K562 (cell line): ENCODE measurements at regions of chr7 and their contacts with region 1.

Region 1: DNA sequence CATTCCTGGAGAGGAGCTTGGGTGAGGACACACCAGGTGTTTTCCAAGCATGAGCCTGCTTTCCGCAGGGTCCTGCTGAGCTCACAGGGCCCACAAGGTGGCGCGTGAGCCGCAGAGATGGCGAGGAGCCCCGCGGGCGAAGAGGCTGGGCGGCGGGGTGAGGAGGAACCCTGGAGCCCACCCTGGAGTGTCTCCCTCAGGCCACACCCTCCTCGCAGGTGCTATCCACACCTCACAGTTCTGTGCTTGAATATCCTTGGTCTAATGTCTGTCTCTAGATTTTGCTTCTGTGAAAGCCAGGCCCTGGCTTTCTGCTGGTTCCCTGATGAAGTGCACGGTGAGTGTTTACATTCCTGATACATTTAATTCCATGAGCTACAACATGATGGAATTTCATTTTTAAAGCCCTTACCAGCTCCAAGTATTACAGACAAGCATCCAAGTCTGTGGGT is 433.6 kb downstream of the ACTR3B start:
- DNase-seq: peak; percentile 64 to 76 (median 66)
- ATAC-seq: peak; percentile 94
- H3K4me3 ChIP-seq: no peak overlapping the region
- H3K27ac ChIP-seq: no peak overlapping the region
- H3K4me1 ChIP-seq: peaks cover 0 to 4% of the 10 kb centered on the region in 2 experiments; a peak in 1 of 5 replicates
- H3K27me3 ChIP-seq: no peaks in the 10 kb centered on the region; a peak in 2 of 5 replicates
- CTCF ChIP-seq: peak; percentile 81 to 94 (median 85)
- EP300 ChIP-seq: no peak
- POLR2A ChIP-seq: no peak
- RAD21 ChIP-seq: peak; percentile 72 to 85

Region 2: DNA sequence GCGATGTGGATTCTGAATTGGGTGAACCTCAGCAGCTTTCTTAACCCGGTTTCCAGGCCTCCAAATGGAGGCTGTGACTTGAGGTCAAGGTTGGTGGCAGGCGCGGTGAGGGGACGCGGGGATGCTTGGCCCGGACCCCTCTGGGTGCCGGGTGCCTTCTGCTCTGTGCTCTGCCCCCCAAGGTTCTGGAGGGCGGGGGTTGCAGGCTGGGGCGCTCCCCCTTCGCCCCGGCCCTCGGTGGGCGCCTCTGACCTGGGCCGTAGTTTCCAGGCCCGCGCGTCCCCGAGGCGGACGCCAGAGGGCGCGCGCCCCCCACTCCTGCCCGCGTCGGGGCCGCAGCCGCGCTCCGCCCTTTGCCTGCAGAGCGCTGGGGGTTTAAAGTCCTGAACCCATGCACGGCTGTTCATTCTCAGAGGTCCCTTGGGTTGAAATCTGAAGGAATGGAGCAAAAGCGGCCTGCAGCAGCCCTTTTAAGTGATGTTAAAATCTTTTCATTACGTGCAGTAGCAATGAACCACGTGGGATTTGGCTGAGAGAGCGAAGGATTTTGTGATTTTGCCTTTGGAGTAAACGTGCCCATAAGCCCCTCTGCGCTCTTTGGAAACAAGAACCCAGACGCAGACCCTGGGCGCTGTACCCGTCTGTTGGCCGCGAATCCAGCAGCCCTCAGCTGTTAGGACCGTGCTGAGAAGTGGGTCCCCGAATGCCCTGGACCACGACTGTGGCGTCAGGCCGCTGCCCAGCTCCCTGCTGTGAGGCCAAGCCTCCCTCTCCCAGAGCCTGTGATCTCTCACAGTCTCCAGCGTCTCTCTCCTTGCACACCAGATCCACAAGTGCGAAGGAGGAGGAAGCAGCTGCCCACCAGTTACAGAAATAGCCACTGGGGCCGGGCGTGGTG is 298.6 kb before region 1 on chr7:
- CTCF ChIA-PET with region 1: no interaction called
- POLR2A ChIA-PET with region 1: no interaction called
- in situ Hi-C with region 1: no loop called
- intact Hi-C with region 1: loop called (anchors 5 kb)
- DNase-seq: peak; percentile 69 to 94 (median 90)
- ATAC-seq: peak; percentile 97
- H3K4me3 ChIP-seq: no peak overlapping the region
- H3K27ac ChIP-seq: no peak overlapping the region
- H3K4me1 ChIP-seq: peaks cover 0 to 14% of the 10 kb centered on the region in 2 experiments; a peak in 1 of 5 replicates
- H3K27me3 ChIP-seq: peaks cover 42 to 66% of the 10 kb centered on the region in 2 experiments
- CTCF ChIP-seq: peak; percentile 87 to 93 (median 91)
- EP300 ChIP-seq: no peak
- POLR2A ChIP-seq: no peak
- RAD21 ChIP-seq: peak; percentile 88 to 94

Region 3: DNA sequence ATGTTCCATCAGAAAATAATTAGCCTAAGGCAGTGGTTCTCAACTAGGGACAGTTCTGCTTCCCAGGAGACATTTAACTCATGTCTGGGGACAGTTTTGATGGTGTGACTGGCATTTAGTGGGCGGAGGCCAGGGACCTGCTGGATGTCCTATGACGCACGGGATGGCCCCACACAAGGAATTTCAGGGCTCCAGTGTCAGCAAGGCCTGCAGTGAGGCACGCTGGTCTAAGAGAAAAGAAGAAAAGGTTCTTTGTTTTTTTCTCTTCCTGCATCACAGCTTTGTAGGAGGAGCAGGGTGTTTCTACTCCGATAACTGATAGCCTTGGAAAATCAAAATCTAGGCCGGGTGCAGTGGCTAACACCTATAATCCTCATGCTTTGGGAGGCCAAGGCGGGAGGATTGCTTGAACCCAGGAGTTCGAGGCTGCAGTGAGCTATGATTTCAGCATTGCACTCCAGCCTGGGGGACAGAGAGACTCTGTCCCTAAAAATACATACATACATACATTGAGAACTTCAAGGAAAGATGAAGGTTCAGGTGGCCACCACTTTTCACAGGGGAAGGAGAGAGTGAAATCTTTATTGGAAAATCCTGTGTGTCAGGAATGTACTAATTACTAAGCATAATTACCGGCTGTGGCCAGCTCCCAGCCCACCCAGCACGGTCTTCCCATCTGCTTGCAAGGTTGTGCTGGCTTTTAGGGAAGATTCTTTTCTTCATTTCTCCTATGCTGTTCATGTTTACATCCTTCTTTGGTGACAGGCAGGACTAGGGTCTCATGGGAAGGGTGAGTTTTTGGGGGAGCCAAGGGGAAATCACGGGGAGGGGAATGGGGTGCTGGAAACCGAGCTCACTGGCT is 283.3 kb before region 1 on chr7:
- CTCF ChIA-PET with region 1: no interaction called
- POLR2A ChIA-PET with region 1: no interaction called
- in situ Hi-C with region 1: no loop called
- intact Hi-C with region 1: no loop called
- DNase-seq: no peak
- ATAC-seq: no peak
- H3K4me3 ChIP-seq: no peak overlapping the region
- H3K27ac ChIP-seq: no peak overlapping the region
- H3K4me1 ChIP-seq: 0 out of 5 replicates have a peak, but pooled peaks cover 0 to 3% of the 10 kb centered on the region in 2 experiments
- H3K27me3 ChIP-seq: peaks cover 28 to 56% of the 10 kb centered on the region in 2 experiments
- CTCF ChIP-seq: no peak
- EP300 ChIP-seq: no peak
- POLR2A ChIP-seq: no peak
- RAD21 ChIP-seq: no peak

Region 4: DNA sequence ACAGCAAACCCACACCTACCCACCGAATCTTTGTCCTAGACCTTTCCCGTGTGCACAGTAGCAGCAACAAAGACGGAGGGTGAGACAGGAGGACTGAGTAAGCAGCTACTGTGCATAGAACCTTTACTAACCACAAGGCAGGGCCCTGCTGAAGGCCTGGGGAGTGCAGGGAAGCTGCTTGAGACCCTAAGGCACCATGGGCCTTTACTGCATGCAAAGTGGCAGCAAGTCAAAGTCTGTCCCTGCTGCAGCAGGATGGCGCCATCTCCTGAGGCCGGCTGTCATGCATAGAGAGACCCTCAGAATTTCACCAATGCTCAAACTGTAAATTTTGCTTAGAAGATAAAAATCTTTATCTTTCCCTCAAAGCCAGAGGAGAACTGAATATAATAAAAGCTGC is 176.9 kb after region 1 on chr7:
- CTCF ChIA-PET with region 1: no interaction called
- POLR2A ChIA-PET with region 1: no interaction called
- in situ Hi-C with region 1: no loop called
- intact Hi-C with region 1: loop called (anchors 10 kb)
- DNase-seq: no peak
- ATAC-seq: peak; percentile 74
- H3K4me3 ChIP-seq: no peak overlapping the region
- H3K27ac ChIP-seq: no peak overlapping the region
- H3K4me1 ChIP-seq: peaks cover 2 to 3% of the 10 kb centered on the region in 2 experiments; a peak in 3 of 5 replicates
- H3K27me3 ChIP-seq: no peaks in the 10 kb centered on the region
- CTCF ChIP-seq: peak; percentile 17 to 33 (median 27); a peak in 2 of 6 replicates
- EP300 ChIP-seq: no peak
- POLR2A ChIP-seq: no peak
- RAD21 ChIP-seq: peak in 1 of 2 experiments; percentile 12; a peak in 1 of 4 replicates

Region 5: DNA sequence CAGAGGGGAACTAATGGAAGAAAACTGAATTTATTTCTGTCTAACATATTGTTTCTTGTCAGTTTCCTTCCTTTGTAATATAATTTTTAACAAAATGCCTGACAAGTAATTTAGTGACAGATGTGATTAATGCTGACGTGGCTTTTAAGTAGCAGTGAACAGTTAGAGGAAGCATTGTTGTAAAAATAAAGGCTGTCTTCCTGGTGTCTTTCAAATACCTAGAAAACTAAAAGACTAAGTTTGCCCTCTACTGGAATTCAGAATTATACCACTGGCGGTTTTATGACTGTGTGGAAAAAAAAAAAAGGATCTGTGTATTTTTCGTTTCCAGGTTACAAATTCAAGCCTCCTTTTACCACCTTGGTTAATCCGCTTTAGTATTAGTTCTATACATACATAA is 641.9 kb after region 1 on chr7:
- CTCF ChIA-PET with region 1: interaction called, 4 read pairs
- POLR2A ChIA-PET with region 1: no interaction called
- in situ Hi-C with region 1: no loop called
- intact Hi-C with region 1: loop called (anchors 10 kb)
- DNase-seq: peak in 1 of 4 experiments; percentile 5
- ATAC-seq: peak; percentile 60; the same call in 1 of the 3 replicates
- H3K4me3 ChIP-seq: no peak overlapping the region
- H3K27ac ChIP-seq: no peak overlapping the region
- H3K4me1 ChIP-seq: no peaks in the 10 kb centered on the region
- H3K27me3 ChIP-seq: no peaks in the 10 kb centered on the region
- CTCF ChIP-seq: peak in 1 of 3 experiments; percentile 43; a peak in 2 of 6 replicates
- EP300 ChIP-seq: no peak
- POLR2A ChIP-seq: no peak
- RAD21 ChIP-seq: peak; percentile 34 to 42